Ascending aorta (tissue), 2 donors: ENCODE measurements at regions of chr5 and their contacts with region 1.

Region 1: GRCh38 chr5:136249678-136250266 is 56.8 kb upstream of the SMIM32 start:
- DNase-seq: no peak
- H3K4me3 ChIP-seq: no peak overlapping the region
- H3K27ac ChIP-seq: no peak overlapping the region
- H3K4me1 ChIP-seq: peaks cover 0 to 5% of the 10 kb centered on the region in 2 donors
- H3K27me3 ChIP-seq: no peaks in the 10 kb centered on the region
- CTCF ChIP-seq: peak; percentile 20 to 75 (median 72)

Region 2: DNA sequence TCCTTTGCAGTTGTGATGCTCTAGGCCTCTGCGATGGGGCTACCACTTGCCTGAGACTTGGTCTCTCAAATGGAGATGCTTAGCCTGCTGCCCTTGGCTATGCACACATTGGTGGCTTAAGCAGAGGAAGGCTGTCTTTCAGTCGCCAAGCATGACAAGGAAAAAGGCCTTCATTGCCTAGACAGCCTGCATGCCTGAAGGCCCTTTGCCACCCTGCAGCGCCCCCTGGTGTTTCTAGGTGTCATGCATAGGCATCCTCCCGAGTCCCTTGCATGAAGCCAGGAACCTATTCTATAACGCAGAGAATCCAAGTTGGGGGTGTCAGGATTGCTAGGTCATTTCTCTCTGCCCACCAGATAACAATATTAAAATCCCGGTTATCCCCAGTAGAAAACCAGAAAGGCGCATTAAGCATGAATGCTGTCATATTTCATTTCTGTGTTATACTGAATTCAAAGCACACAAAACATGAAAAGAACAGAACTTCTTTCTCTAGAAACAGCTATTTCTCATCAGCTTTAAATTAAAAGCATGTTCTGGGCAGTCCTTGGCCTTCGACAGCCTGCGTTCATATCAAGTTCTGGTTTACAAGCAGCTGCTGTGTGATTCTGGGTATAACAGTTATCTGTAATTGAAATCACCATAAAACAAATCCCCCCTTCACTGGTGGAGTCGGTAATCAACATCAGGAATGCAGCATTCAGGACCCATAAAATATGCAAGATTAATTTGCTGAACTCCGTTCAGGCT is 175.2 kb after region 1 on chr5:
- intact Hi-C with region 1: loop called (anchors 2 kb)
- DNase-seq: peak in 1 of 2 donors; percentile 69
- H3K4me3 ChIP-seq: no peak overlapping the region
- H3K27ac ChIP-seq: no peak overlapping the region
- H3K4me1 ChIP-seq: no peaks in the 10 kb centered on the region
- H3K27me3 ChIP-seq: no peaks in the 10 kb centered on the region
- CTCF ChIP-seq: peak; percentile 2 to 57 (median 36)

Region 3: DNA sequence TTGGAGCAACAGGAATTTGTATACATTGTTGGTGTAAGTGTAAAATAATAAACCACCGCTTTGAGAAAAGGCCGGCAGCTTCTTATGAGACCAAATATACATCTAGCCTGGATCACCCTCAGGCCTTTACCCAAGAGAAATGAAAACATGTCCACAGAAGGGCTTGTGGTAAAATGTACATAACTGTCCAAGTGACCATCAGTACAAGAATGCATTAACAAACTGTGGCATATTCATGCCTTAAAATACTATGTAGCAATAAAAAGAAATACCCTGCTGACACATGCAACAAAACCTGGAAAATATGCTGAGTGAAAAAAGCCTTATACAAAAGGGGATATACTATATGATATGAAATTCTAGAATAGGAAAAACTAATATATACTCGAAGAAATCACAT is 427.4 kb after region 1 on chr5:
- intact Hi-C with region 1: no loop called
- DNase-seq: no peak
- H3K4me3 ChIP-seq: no peak overlapping the region
- H3K27ac ChIP-seq: no peak overlapping the region
- H3K4me1 ChIP-seq: no peaks in the 10 kb centered on the region
- H3K27me3 ChIP-seq: no peaks in the 10 kb centered on the region
- CTCF ChIP-seq: no peak

Region 4: GRCh38 chr5:136769900-136770684 is 520.3 kb after region 1 on chr5:
- intact Hi-C with region 1: loop called (anchors 1 kb)
- DNase-seq: peak in 1 of 2 donors; percentile 72
- H3K4me3 ChIP-seq: no peak overlapping the region
- H3K27ac ChIP-seq: no peak overlapping the region
- H3K4me1 ChIP-seq: no peaks in the 10 kb centered on the region
- H3K27me3 ChIP-seq: no peaks in the 10 kb centered on the region
- CTCF ChIP-seq: peak; percentile 50 to 74 (median 50)